HepG2 (cell line): ENCODE measurements at regions of chr5 and their contacts with region 1.

Region 1: DNA sequence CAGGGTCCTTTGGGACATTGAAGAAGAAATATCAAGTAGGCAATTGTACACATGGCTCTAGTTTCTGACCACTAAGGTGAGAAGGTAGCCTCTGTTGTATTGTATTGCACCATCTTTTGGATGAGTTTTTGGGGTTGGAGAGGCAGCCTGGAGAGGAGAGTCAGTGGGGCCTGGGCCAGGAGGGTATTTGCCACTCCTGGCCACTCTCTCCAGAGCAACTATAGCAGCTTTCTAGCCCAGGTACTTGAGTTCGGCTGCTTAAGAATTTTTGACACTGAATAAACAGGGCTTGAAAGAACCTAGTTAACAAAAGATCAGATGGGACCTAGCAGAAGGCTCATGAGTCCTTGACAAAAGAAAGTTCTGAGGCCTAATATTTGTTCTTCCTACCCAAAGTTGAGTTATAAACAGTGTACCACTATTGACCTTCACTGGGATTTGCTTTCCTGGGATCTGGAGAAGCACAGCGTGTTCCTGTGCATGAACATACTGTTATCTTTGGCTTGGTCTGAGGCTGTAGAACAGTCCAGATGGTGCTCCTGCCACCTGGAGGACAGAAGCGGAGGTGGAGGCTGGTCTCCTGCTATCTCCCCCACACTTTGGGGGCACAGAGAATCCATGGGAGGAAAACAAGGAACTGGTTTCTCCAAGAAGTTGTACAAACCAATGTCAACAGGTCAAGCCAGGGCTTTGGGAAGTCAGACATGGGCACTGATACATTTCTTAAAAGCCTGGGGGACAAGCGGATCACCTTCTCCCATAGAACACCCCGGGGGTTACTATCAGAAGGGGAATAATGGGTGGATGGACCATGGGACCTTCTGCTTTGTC is 110.4 kb upstream of the LIFR start:
- DNase-seq: peak; percentile 25
- ATAC-seq: peak; percentile 98
- H3K4me3 ChIP-seq: no peak overlapping the region
- H3K27ac ChIP-seq: no peak overlapping the region
- H3K4me1 ChIP-seq: peaks cover 7% of the 10 kb centered on the region
- H3K27me3 ChIP-seq: no peaks in the 10 kb centered on the region; a peak in 2 of 5 replicates
- CTCF ChIP-seq: peak; percentile 73
- EP300 ChIP-seq: no peak
- POLR2A ChIP-seq: no peak
- RAD21 ChIP-seq: peak; percentile 60; the same call in 1 of the 2 replicates

Region 2: DNA sequence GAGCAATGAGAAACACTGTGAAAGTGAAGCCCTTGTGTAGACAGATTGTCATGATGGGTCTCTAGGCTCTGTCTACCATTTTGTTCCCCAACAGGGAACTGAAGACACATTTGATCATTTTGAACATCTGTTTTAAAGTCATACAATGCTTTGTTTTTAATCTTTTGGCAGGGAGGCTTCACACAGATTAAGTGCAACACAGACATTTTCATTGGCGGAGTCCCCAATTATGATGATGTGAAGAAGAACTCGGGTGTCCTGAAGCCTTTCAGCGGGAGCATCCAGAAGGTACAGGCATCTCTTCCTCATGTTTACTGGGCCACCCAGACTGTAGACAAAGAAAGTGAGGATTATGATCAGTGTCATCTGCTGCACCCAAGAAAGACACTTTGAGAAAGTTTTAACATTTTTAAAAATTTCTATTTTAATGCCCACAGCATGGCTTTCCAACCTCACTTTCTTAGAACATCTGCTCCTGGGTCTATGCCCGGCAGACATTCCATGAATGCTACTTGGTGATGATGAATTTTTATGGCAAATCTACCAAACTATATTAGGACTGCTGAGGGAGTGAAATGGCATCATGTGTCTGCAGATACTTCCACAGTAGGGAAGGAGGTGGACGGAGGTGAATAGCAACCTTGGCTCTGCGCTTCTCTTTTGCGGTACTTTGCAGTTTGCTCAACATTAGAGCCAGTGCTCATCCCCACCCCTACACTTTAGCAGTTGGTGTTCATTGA is 231.7 kb before region 1 on chr5:
- CTCF ChIA-PET with region 1: no interaction called
- POLR2A ChIA-PET with region 1: no interaction called
- in situ Hi-C with region 1: loop called (anchors 5 kb)
- intact Hi-C with region 1: no loop called
- DNase-seq: no peak
- ATAC-seq: no peak
- H3K4me3 ChIP-seq: no peak overlapping the region
- H3K27ac ChIP-seq: no peak overlapping the region
- H3K4me1 ChIP-seq: 0 out of 2 replicates have a peak, but pooled peaks cover 6% of the 10 kb centered on the region
- H3K27me3 ChIP-seq: peaks cover 0 to 20% of the 10 kb centered on the region in 2 experiments; a peak in 3 of 5 replicates
- CTCF ChIP-seq: no peak
- EP300 ChIP-seq: no peak
- POLR2A ChIP-seq: no peak
- RAD21 ChIP-seq: no peak

Region 3: DNA sequence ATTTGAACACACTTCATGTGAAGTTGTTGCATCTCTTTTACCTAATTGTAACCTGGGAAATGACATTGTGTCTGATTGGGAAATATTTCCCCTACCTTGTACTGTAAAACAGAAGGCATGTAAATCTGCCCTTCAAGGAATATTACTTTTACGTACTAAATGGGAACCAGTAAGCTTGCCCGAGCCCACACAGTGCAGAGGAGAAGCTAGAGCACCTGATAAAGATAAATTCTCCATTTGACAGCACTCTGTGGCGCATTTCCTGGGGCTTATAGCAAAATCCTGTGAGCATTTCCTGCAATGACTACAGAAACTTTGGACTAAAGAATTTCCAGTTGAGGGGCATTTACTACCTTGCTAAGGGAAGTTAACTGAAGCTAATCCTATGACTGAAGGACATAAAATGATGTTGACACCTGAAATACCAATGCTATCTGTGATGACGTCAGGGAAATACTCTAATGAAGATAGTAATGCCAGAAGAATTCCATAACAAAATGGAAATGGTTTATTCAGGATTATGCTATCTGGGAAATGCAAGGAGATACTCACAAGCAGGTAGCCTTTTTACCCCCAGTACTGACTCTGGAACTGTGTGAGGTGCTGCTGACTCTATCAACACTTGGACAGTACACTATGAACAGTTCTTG is 32.0 kb before region 1 on chr5:
- CTCF ChIA-PET with region 1: no interaction called
- POLR2A ChIA-PET with region 1: no interaction called
- in situ Hi-C with region 1: no loop called
- intact Hi-C with region 1: no loop called
- DNase-seq: no peak
- ATAC-seq: no peak
- H3K4me3 ChIP-seq: no peak overlapping the region
- H3K27ac ChIP-seq: no peak overlapping the region
- H3K4me1 ChIP-seq: no peaks in the 10 kb centered on the region
- H3K27me3 ChIP-seq: peaks cover 0 to 4% of the 10 kb centered on the region in 2 experiments; a peak in 1 of 5 replicates
- CTCF ChIP-seq: no peak
- EP300 ChIP-seq: no peak
- POLR2A ChIP-seq: no peak
- RAD21 ChIP-seq: no peak

Region 4: DNA sequence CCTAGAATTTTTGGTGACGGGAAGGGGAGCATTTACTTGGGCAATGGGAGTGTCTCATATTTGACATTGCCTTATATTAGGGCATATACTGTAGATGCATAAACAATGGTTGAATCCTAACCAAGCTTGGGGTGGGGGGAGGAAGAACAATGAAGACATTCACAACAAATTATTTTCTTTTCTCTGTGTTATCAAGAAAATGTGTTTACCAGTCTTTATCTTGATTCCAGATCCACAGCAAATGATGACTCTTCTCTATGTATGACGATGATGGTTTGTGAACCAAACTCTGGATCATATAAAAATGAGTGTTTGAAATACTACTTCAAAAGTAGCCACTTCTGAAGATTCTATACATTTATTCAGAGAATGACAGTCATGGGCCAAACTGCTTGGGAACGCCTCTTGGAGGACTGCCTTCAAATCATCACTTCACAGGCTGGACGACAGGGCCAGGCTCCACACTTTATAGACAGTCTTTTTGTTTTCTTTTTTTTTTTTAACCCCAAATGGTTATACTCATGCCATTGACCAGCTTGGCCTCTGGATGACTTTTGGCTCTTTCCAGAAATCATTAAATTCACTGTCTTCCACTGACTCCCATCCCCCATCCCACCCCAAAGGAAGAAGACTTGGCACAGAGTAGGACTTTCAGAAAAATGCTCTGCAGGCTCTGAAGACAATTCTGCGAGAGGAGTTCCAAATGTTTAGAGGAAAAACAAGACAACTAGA is 13.4 kb after region 1 on chr5:
- CTCF ChIA-PET with region 1: no interaction called
- POLR2A ChIA-PET with region 1: no interaction called
- in situ Hi-C with region 1: no loop called
- intact Hi-C with region 1: no loop called
- DNase-seq: no peak
- ATAC-seq: no peak
- H3K4me3 ChIP-seq: no peak overlapping the region
- H3K27ac ChIP-seq: no peak overlapping the region
- H3K4me1 ChIP-seq: no peaks in the 10 kb centered on the region
- H3K27me3 ChIP-seq: peaks cover 0 to 6% of the 10 kb centered on the region in 2 experiments; a peak in 2 of 5 replicates
- CTCF ChIP-seq: no peak
- EP300 ChIP-seq: no peak
- POLR2A ChIP-seq: no peak
- RAD21 ChIP-seq: no peak